ENCODE measurements at regions of chr15 and their contacts with region 1.

Region 1: DNA sequence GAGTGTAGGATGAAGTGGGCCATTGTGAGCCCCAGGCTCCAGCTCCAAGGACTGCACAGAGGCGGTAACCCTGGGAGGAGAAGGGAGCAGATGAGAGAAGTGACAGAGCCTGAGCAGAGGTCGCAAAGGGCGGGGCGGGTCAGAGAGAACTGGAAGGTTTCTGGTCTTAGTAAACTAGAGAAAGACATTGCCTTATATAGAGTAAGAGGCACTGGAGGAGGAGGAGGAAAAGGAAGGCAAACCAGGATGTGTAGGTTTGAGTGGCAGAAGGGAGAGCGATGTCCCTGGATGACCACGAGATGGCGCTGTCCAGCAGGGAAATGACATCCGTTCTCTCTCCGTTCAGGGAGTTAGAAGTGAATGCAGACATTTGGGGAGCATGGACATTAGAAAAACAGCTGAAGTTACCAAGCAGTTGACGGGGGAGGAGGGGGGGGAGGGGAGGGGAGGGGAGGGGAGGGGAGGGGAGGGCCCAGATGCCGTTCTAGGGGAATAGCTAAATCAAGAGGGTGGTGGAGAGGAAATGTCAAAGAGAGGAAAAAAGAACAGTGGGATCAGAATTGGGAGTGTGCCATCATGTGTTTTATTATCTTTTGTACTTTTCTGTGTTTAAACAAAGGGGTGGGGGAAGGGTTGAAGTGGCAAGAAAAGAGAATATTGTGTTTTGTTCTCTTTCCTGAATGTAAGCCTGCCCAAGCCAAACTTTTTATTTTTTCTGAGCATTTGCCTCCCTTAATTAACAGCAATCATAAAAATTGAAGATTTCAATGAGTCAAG is 48.8 kb downstream of the STARD5 start:
- DNase-seq: peak; percentile 94
- H3K4me3 ChIP-seq: no peak overlapping the region
- H3K27ac ChIP-seq: peak overlapping the region in 4 of 8 donors; percentile 25 to 47 (median 40)
- H3K4me1 ChIP-seq: peaks cover 0 to 25% (median 10%) of the 10 kb centered on the region in 6 donors
- H3K27me3 ChIP-seq: no peaks in the 10 kb centered on the region
- CTCF ChIP-seq: peak; percentile 78 to 98 (median 92)
- POLR2A ChIP-seq: no peak

Region 2: GRCh38 chr15:81336568-81336967 is 61.4 kb after region 1 on chr15:
- intact Hi-C with region 1: loop called (anchors 5 kb)
- DNase-seq: no peak
- H3K4me3 ChIP-seq: no peak overlapping the region
- H3K27ac ChIP-seq: no peak overlapping the region
- H3K4me1 ChIP-seq: peaks cover 0 to 11% (median 0%) of the 10 kb centered on the region in 6 donors
- H3K27me3 ChIP-seq: no peaks in the 10 kb centered on the region
- CTCF ChIP-seq: peak; percentile 14 to 65 (median 52)
- POLR2A ChIP-seq: no peak

Region 3: DNA sequence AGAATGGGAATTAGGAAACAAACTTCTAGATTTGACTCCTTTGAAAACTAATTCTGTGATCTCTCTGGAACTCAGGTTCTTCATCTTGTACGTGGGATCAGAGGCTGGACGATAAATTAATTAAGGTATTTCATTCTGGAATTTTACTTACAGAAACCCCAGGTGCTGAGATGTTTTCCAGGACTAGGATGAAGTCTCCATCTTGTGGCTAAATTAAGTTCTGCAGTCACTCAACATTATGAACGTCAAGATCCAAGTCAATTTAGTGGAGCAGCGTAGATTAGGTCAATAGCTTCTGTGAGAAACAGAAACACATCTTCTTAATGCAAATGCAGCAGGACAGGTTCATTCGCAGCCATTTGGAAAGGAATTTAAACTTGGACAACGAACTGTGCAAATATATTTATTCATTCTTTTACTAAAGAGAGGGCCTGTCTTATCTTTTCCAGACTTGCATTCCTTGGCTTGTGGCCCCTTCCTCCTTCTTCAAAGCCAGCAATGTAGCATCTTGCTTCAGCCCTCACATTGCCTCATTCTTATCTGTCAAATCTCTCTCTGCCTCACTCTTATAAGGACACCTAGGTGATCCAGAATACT is 125.6 kb after region 1 on chr15:
- intact Hi-C with region 1: loop called (anchors 2 kb)
- DNase-seq: no peak
- H3K4me3 ChIP-seq: no peak overlapping the region
- H3K27ac ChIP-seq: no peak overlapping the region
- H3K4me1 ChIP-seq: no peaks in the 10 kb centered on the region
- H3K27me3 ChIP-seq: no peaks in the 10 kb centered on the region
- CTCF ChIP-seq: peak; percentile 51 to 81 (median 74)
- POLR2A ChIP-seq: no peak

Measured in spleen (tissue), 13 donors.